Mammary epithelial cell (primary cell): ENCODE measurements at regions of chr9 and their contacts with region 1.

Region 1: DNA sequence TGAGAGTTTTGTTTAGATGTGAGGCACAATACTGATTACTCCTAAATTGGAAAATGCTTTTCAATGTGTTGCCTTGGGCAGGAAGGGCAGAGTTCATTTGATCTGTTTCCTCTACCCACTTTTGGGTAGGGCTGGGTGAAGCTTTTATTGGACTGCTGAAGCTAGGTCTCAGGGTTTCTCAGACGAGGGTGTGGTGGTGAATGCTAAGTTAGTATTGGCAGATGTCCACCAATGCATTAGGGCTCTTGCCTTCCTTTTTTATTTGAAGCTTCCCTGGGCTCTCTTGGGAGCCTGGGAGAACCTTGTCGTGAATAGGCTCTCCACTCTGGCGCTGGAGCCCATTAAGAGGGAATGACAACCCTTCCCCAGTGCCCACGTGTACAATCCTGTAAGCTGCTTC is 23.1 kb downstream of the SPTAN1 start:
- DNase-seq: no peak
- H3K4me3 ChIP-seq: no peak overlapping the region
- H3K27ac ChIP-seq: no peak overlapping the region
- H3K4me1 ChIP-seq: no peaks in the 10 kb centered on the region
- H3K27me3 ChIP-seq: no peaks in the 10 kb centered on the region
- CTCF ChIP-seq: no peak

Region 2: DNA sequence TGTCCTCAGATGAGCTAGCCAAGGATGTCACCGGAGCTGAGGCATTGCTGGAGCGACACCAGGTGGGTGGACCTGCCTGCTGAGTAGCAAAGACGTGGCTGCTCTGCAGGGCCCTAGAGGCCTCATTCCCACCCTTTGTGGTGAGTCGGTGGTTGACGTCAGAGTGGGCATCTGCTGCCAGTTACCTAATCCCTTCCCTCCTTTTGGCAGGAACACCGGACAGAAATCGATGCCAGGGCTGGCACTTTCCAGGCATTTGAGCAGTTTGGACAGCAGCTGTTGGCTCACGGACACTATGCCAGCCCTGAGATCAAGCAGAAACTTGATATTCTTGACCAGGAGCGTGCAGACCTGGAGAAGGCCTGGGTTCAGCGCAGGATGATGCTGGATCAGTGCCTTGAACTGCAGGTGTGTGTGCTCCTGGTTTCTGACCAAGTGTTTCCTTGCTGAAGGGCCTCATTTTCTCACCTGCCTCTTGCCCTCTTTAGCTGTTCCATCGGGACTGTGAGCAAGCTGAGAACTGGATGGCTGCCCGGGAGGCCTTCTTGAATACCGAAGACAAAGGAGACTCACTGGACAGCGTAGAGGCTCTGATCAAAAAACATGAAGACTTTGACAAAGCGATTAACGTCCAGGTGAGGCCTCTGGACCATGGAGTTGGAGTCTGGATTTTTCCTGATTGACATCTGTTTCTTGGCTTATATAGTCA is 32.3 kb after region 1 on chr9:
- CTCF ChIA-PET with region 1: no interaction called
- dilution Hi-C with region 1: loop called (anchors 5 kb)
- in situ Hi-C with region 1: no loop called
- intact Hi-C with region 1: no loop called
- DNase-seq: no peak
- H3K4me3 ChIP-seq: no peak overlapping the region
- H3K27ac ChIP-seq: no peak overlapping the region
- H3K4me1 ChIP-seq: no peaks in the 10 kb centered on the region
- H3K27me3 ChIP-seq: no peaks in the 10 kb centered on the region
- CTCF ChIP-seq: no peak